GM12878 (cell line): ENCODE measurements at regions of chr13 and their contacts with region 1.

Region 1: DNA sequence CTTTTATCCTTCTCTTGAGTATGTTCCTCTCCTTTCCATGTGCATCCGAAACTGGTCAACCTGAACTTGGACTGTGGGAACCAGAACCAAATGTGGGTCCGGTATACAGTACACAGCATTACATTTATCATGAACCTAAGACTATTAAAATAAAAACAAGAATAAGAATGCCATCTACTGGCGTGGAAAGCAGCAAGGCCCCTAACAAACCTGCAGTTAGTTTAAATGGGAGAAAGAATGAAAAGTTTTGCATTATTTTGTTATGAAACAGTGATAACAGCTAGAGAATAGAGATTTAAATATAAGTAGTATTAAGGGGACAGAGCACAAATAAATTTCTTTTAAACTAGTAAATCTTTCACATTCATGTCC is 159.5 kb downstream of the RBM26 start:
- DNase-seq: no peak
- ATAC-seq: peak; percentile 79
- H3K4me3 ChIP-seq: no peak overlapping the region
- H3K27ac ChIP-seq: no peak overlapping the region
- H3K4me1 ChIP-seq: peaks cover 7% of the 10 kb centered on the region
- H3K27me3 ChIP-seq: no peaks in the 10 kb centered on the region
- CTCF ChIP-seq: peak; percentile 23 to 50 (median 42); a peak in 5 of 6 replicates
- EP300 ChIP-seq: no peak
- POLR2A ChIP-seq: no peak
- RAD21 ChIP-seq: peak; percentile 68

Region 2: DNA sequence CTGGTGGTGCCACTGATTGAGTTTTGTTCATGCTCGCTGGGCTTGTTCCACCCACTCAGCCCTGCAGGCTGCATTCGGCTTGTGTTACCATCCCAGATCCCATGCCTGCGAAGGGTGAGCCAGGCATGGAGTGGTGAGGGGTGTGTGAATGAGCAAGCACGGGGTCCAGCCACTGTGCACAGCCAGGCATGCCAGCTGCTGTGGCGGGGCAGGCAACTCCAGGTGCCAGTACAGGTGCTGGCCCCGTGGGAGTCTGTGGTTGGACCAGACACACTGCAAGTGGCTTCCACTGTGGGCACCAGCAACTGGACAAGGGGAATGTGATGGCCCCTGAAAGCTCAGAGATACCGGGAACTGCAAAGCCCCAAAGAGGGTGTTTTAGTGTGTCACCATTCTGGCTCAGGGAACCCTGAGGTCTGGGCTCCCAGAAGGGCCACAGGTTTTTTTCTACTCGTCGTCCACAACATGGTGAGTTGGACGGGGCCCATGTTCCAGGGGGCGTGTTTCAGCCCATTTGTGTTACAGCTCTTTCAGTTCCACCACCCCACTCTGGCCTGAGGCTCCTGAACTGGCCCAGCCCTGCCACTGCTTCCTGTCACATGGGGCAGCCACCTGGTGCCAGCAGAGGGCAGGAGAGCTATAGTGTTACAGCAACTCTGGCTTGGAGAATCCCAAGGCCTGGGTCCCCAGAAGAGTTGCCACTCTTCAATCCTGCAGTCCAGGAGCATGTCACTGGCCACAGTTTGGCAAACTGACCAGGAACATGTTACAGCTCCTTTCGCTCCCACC is 370.6 kb before region 1 on chr13:
- CTCF ChIA-PET with region 1: interaction called, 3 read pairs
- POLR2A ChIA-PET with region 1: no interaction called
- RAD21 ChIA-PET with region 1: no interaction called
- SMC1A ChIA-PET with region 1: no interaction called
- in situ Hi-C with region 1: no loop called
- intact Hi-C with region 1: loop called (anchors 1 kb)
- DNase-seq: no peak
- ATAC-seq: peak; percentile 97
- H3K4me3 ChIP-seq: no peak overlapping the region
- H3K27ac ChIP-seq: no peak overlapping the region
- H3K4me1 ChIP-seq: no peaks in the 10 kb centered on the region
- H3K27me3 ChIP-seq: no peaks in the 10 kb centered on the region
- CTCF ChIP-seq: peak in 2 of 3 experiments; percentile 25 to 38; a peak in 2 of 6 replicates
- EP300 ChIP-seq: no peak
- POLR2A ChIP-seq: no peak
- RAD21 ChIP-seq: peak; percentile 48

Region 3: DNA sequence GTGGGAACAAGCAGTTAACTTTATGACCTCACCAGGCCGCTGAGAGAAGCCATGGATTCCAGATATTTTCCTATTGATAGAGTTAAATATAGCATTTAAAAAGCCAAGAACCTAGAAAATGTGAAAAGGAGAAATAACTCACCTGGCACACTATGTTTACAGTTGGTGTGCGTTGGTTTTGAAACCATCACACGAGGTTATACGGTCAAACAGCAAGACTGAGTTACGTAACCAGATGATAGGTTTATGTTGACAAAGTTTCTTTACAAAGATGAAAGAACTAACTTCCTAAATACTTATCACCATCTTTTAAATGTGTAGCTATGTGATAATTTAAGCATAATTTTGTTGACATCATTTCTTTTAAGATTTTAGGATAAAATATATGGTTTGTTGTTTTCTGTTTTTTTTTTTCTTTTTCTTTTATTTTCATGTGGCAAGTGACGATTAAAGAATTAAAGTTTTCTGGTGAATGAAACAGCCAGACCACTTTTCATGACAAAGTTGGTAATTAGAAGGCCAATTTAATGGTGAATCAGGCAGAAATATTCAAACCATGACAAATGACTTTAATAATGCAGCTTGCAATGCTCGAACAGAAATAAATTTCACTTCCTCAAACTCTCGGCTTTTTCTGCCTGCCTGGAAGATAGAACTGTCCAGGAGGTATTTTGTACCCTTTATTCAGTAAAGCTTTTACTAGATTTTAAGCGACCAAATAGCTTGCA is 248.5 kb before region 1 on chr13:
- CTCF ChIA-PET with region 1: no interaction called
- POLR2A ChIA-PET with region 1: no interaction called
- RAD21 ChIA-PET with region 1: no interaction called
- SMC1A ChIA-PET with region 1: no interaction called
- in situ Hi-C with region 1: no loop called
- intact Hi-C with region 1: no loop called
- DNase-seq: no peak
- ATAC-seq: peak; percentile 69
- H3K4me3 ChIP-seq: no peak overlapping the region
- H3K27ac ChIP-seq: no peak overlapping the region
- H3K4me1 ChIP-seq: no peaks in the 10 kb centered on the region
- H3K27me3 ChIP-seq: no peaks in the 10 kb centered on the region
- CTCF ChIP-seq: no peak
- EP300 ChIP-seq: peak in 1 of 2 experiments; percentile 47; a peak in 1 of 4 replicates
- POLR2A ChIP-seq: no peak
- RAD21 ChIP-seq: no peak

Region 4: GRCh38 chr13:79070343-79070974 is 176.1 kb before region 1 on chr13:
- CTCF ChIA-PET with region 1: no interaction called
- POLR2A ChIA-PET with region 1: no interaction called
- RAD21 ChIA-PET with region 1: no interaction called
- SMC1A ChIA-PET with region 1: no interaction called
- in situ Hi-C with region 1: no loop called
- intact Hi-C with region 1: loop called (anchors 5 kb)
- DNase-seq: peak; percentile 2
- ATAC-seq: peak; percentile 54
- H3K4me3 ChIP-seq: no peak overlapping the region
- H3K27ac ChIP-seq: no peak overlapping the region
- H3K4me1 ChIP-seq: peaks cover 9% of the 10 kb centered on the region; the same call in 1 of the 2 replicates
- H3K27me3 ChIP-seq: no peaks in the 10 kb centered on the region
- CTCF ChIP-seq: no peak
- EP300 ChIP-seq: no peak
- POLR2A ChIP-seq: no peak
- RAD21 ChIP-seq: no peak

Region 5: DNA sequence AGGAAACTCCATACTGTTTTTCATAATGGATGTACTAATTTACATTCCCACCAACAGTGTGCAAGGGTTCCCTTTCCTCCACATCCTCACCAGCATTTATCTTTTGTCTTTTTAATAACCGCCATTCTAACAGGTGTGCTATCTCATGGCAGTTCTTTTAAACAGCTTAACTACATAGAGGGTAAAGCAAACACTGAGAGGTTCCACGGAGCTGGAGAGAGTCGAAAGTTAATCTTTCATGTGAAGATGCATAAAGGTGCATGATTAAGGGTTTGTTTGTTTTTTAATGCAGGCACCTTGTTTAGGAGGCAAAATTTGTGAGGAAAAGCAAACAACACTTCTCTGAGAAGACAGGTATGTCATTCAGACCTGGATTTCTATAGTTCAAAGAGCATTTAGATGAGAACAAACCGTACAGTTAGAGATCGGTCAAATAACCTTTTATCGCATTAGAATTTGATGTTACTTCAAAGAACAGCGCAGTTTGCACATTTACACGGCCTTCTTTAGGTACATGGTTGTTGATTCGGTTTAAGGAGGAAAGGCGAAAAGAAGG is 34.4 kb before region 1 on chr13:
- CTCF ChIA-PET with region 1: no interaction called
- POLR2A ChIA-PET with region 1: no interaction called
- RAD21 ChIA-PET with region 1: no interaction called
- SMC1A ChIA-PET with region 1: no interaction called
- in situ Hi-C with region 1: no loop called
- intact Hi-C with region 1: no loop called
- DNase-seq: no peak
- ATAC-seq: no peak
- H3K4me3 ChIP-seq: no peak overlapping the region
- H3K27ac ChIP-seq: no peak overlapping the region
- H3K4me1 ChIP-seq: no peaks in the 10 kb centered on the region
- H3K27me3 ChIP-seq: no peaks in the 10 kb centered on the region
- CTCF ChIP-seq: no peak
- EP300 ChIP-seq: no peak
- POLR2A ChIP-seq: no peak
- RAD21 ChIP-seq: no peak